Heart right ventricle (tissue), 16 donors: ENCODE measurements at regions of chr6 and their contacts with region 1.

Region 1: DNA sequence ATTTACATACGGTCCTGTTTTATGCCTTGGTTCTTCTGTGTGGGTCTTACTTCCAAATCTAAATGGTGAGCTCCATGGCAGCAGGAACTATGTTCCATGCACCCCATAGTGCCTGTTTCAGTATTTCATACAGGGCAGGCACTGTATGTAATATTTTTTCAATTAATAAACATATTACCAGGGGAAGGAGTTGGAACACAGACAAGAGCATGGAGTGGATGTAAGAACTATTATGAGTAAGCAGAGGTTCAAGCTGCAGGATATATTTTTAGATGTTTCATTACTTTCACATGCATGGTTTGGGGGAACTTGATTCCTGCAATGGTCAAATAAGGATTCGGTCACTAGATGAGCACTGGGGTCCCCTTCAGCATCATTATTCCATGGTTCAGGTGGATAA is 108.3 kb downstream of the KIF13A start:
- DNase-seq: no peak
- ATAC-seq: peak in 1 of 8 donors; percentile 23
- H3K4me3 ChIP-seq: no peak overlapping the region
- H3K27ac ChIP-seq: no peak overlapping the region
- H3K4me1 ChIP-seq: peaks cover 0 to 42% (median 21%) of the 10 kb centered on the region in 9 donors
- H3K27me3 ChIP-seq: no peaks in the 10 kb centered on the region
- CTCF ChIP-seq: no peak

Region 2: GRCh38 chr6:17584241-17584803 is 294.9 kb before region 1 on chr6:
- intact Hi-C with region 1: no loop called
- DNase-seq: peak in 1 of 2 donors; percentile 53
- ATAC-seq: peak; percentile 71 to 93 (median 90)
- H3K4me3 ChIP-seq: peak overlapping the region in 7 of 10 donors; percentile 17 to 41 (median 20)
- H3K27ac ChIP-seq: peak overlapping the region; percentile 5 to 80 (median 58)
- H3K4me1 ChIP-seq: peaks cover 0 to 19% (median 8%) of the 10 kb centered on the region in 9 donors
- H3K27me3 ChIP-seq: peaks cover 0 to 20% (median 0%) of the 10 kb centered on the region in 7 donors
- CTCF ChIP-seq: peak; percentile 48 to 90 (median 81)

Region 3: GRCh38 chr6:17892097-17892686 is 13.0 kb after region 1 on chr6:
- intact Hi-C with region 1: loop called in 1 of 10 experiments (anchors 2 kb)
- DNase-seq: no peak
- ATAC-seq: peak in 1 of 8 donors; percentile 18
- H3K4me3 ChIP-seq: no peak overlapping the region
- H3K27ac ChIP-seq: no peak overlapping the region
- H3K4me1 ChIP-seq: peaks cover 0 to 14% (median 0%) of the 10 kb centered on the region in 9 donors
- H3K27me3 ChIP-seq: no peaks in the 10 kb centered on the region
- CTCF ChIP-seq: no peak

Region 4: DNA sequence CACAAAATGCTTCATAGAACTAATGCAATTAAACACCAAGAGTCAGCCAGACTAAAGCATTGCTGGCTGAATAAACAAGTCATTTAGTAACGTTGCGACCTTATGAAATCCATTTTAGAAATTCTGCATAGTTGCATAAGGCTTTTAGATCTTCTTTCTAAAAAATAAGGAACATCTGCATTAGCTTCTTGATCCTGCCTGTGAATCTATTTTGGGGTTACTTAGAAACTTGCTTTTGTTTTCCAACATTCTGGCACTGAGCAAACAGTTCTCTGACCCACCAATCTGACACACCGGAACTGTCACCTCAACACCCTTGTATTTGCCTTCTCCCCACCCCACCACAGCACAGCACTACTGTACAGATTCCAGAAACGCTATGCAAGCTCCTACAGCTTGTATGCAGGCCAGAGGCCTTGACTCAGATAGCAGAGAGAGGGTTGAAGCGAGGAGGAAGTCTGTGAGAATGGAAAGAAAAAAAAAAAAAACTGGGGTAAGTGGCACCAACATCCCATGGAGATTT is 53.2 kb after region 1 on chr6:
- intact Hi-C with region 1: no loop called
- DNase-seq: peak in 1 of 2 donors; percentile 83
- ATAC-seq: peak; percentile 82 to 97 (median 88)
- H3K4me3 ChIP-seq: peak overlapping the region in 2 of 10 donors; percentile 1 to 12
- H3K27ac ChIP-seq: peak overlapping the region; percentile 67 to 93 (median 86)
- H3K4me1 ChIP-seq: peaks cover 15 to 99% (median 85%) of the 10 kb centered on the region in 9 donors
- H3K27me3 ChIP-seq: no peaks in the 10 kb centered on the region
- CTCF ChIP-seq: no peak

Region 5: GRCh38 chr6:18501663-18502013 is 622.5 kb after region 1 on chr6:
- intact Hi-C with region 1: no loop called
- DNase-seq: peak; percentile 23 to 46
- ATAC-seq: peak; percentile 51 to 87 (median 74)
- H3K4me3 ChIP-seq: no peak overlapping the region
- H3K27ac ChIP-seq: peak overlapping the region in 5 of 10 donors; percentile 10 to 83 (median 40)
- H3K4me1 ChIP-seq: peaks cover 0 to 31% (median 0%) of the 10 kb centered on the region in 9 donors
- H3K27me3 ChIP-seq: peaks cover 0 to 10% (median 0%) of the 10 kb centered on the region in 7 donors
- CTCF ChIP-seq: no peak